GM10248 (cell line): ENCODE measurements at regions of chr10 and their contacts with region 1.

Region 1: GRCh38 chr10:56360967-56361612 is at the start of gene ZWINT:
- DNase-seq: peak; percentile 93
- CTCF ChIP-seq: no peak

Region 2: DNA sequence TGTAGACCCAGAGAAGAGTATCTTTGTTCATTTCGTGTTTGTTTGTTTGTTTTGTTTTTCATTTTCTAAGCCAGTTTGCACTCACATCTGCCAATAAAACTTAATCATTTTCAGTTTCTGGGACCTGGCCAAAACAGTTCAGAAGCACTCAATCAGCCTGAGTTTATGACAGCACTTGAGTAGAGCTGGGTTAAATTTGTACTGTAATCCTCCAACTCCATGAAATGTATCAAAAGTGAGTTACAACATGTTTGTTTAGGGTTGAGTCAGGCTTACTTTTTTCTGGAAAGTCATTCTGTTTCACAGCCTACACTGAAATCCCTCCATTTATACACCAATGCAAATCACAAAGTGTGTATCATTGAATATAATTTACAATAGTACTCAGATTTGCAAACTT is 91.9 kb before region 1 on chr10:
- CTCF ChIA-PET with region 1: no interaction called
- POLR2A ChIA-PET with region 1: no interaction called
- DNase-seq: no peak
- CTCF ChIP-seq: no peak

Region 3: GRCh38 chr10:56349611-56350010 is 11.5 kb before region 1 on chr10:
- CTCF ChIA-PET with region 1: interaction called, 20 read pairs
- POLR2A ChIA-PET with region 1: no interaction called
- DNase-seq: no peak
- CTCF ChIP-seq: peak; percentile 9